Lower leg skin (tissue), 4 donors: ENCODE measurements at regions of chr9 and their contacts with region 1.

Region 1: GRCh38 chr9:33816327-33817252 is at the start of gene UBE2R2:
- DNase-seq: peak; percentile 88 to 98
- H3K4me3 ChIP-seq: peak within 1 kb of the TSS; percentile 88
- CTCF ChIP-seq: no peak
- POLR2A ChIP-seq: no peak
- total RNA-seq, gene UBE2R2: 30.4 to 39.9 (median 36.5) TPM

Region 2: GRCh38 chr9:33852216-33852826 is 35.7 kb after region 1 on chr9:
- intact Hi-C with region 1: loop called (anchors 5 kb)
- DNase-seq: peak in 1 of 2 donors; percentile 55
- H3K4me3 ChIP-seq: no peak overlapping the region
- CTCF ChIP-seq: no peak
- POLR2A ChIP-seq: no peak